CD4-positive, alpha-beta T cell (primary cell): ENCODE measurements at regions of chr11 and their contacts with region 1.

Region 1: GRCh38 chr11:35246745-35247144 is 107.8 kb downstream of the CD44 start:
- DNase-seq: peak in 1 of 14 experiments; percentile 2
- ATAC-seq: no peak
- H3K4me3 ChIP-seq: no peak overlapping the region
- H3K4me3 Mint-ChIP-seq: peak overlapping the region; percentile 73
- H3K27ac ChIP-seq: peak overlapping the region; percentile 53 to 62
- H3K27ac Mint-ChIP-seq: peak overlapping the region; percentile 97
- H3K4me1 ChIP-seq: peaks cover 53% of the 10 kb centered on the region
- H3K4me1 Mint-ChIP-seq: peaks cover 61% of the 10 kb centered on the region
- H3K27me3 ChIP-seq: no peaks in the 10 kb centered on the region
- H3K27me3 Mint-ChIP-seq: no peaks in the 10 kb centered on the region
- CTCF ChIP-seq: no peak

Region 2: DNA sequence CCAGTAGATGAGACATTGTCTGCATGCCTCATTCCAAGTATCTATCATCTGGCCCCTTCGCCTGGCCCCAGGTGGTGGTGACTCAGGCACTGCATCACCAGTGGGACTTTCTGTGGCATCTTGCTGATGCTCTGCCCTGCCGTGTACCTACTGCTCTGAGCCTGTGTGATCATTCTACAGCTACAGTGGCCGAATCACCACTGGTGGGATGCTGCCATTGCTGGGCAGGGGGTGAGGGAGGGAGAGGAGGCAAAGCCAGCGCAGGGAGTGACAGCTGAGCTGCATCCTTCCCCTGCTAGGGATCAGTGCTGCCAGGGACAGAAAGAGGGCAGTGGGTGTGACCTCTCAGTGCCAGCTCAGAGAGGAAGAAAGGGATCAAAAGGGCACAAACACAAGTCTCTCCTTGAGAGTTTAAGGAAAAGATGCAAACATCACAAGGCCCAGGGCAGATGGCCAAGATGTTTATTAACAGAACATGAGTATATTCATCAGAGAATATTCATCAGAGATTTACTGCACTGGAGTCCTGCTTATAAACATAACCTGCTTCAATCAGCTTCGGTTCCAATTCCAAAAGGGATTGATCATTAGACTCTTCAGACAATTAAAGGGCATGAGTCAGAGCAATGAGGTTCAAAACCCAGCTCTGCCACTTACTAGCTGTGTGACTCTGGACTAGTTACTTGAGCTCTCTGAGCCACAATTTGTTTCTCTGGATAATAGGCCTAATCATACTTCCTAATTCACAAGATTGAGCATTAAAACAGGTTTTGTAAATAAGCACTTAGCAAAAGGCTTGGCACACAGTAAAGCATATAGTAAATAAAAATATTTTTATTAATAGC is 1031.6 kb before region 1 on chr11:
- CTCF ChIA-PET with region 1: no interaction called
- POLR2A ChIA-PET with region 1: no interaction called
- intact Hi-C with region 1: no loop called
- DNase-seq: peak in 6 of 14 experiments; percentile 5 to 46 (median 35)
- ATAC-seq: peak; percentile 32
- H3K4me3 ChIP-seq: no peak overlapping the region
- H3K4me3 Mint-ChIP-seq: no peak overlapping the region
- H3K27ac ChIP-seq: no peak overlapping the region
- H3K27ac Mint-ChIP-seq: no peak overlapping the region
- H3K4me1 ChIP-seq: no peaks in the 10 kb centered on the region
- H3K4me1 Mint-ChIP-seq: no peaks in the 10 kb centered on the region
- H3K27me3 ChIP-seq: no peaks in the 10 kb centered on the region
- H3K27me3 Mint-ChIP-seq: no peaks in the 10 kb centered on the region
- CTCF ChIP-seq: no peak

Region 3: DNA sequence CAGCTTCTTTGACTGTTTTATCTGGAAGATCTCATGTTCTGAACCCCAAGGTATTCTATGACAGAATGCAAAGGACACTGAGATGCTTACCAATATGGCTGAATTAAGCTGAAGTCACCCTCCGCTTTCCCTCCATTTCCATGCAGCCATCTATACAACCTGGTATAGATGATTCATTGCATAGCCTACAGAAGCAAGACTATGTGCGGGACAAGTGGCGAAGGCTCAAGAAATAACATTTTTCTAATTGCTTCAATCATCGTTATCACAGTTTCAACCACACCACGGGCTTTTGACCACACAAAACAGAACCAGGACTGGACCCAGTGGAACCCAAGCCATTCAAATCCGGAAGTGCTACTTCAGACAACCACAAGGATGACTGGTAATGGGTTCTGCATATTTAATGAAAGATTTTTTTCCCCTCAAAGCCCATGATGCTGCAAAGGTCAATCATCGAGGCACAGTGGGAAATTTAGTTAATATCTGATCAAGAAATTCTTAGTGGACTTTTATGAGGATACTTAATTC is 45.9 kb before region 1 on chr11:
- CTCF ChIA-PET with region 1: no interaction called
- POLR2A ChIA-PET with region 1: no interaction called
- intact Hi-C with region 1: loop called in 1 of 2 experiments (anchors 5 kb)
- DNase-seq: no peak
- ATAC-seq: no peak
- H3K4me3 ChIP-seq: no peak overlapping the region
- H3K4me3 Mint-ChIP-seq: no peak overlapping the region
- H3K27ac ChIP-seq: no peak overlapping the region
- H3K27ac Mint-ChIP-seq: peak overlapping the region; percentile 71
- H3K4me1 ChIP-seq: no peaks in the 10 kb centered on the region
- H3K4me1 Mint-ChIP-seq: peaks cover 93% of the 10 kb centered on the region
- H3K27me3 ChIP-seq: no peaks in the 10 kb centered on the region
- H3K27me3 Mint-ChIP-seq: no peaks in the 10 kb centered on the region
- CTCF ChIP-seq: no peak

Region 4: GRCh38 chr11:35265755-35266454 is 19.2 kb after region 1 on chr11:
- CTCF ChIA-PET with region 1: no interaction called
- POLR2A ChIA-PET with region 1: no interaction called
- intact Hi-C with region 1: no loop called
- DNase-seq: no peak
- ATAC-seq: no peak
- H3K4me3 ChIP-seq: no peak overlapping the region
- H3K4me3 Mint-ChIP-seq: no peak overlapping the region
- H3K27ac ChIP-seq: no peak overlapping the region
- H3K27ac Mint-ChIP-seq: no peak overlapping the region
- H3K4me1 ChIP-seq: no peaks in the 10 kb centered on the region
- H3K4me1 Mint-ChIP-seq: no peaks in the 10 kb centered on the region
- H3K27me3 ChIP-seq: no peaks in the 10 kb centered on the region
- H3K27me3 Mint-ChIP-seq: no peaks in the 10 kb centered on the region
- CTCF ChIP-seq: no peak

Region 5: GRCh38 chr11:35305670-35306382 is 59.1 kb after region 1 on chr11:
- CTCF ChIA-PET with region 1: interaction called, 5 read pairs
- POLR2A ChIA-PET with region 1: interaction called, 3 read pairs
- intact Hi-C with region 1: loop called in 1 of 2 experiments (anchors 5 kb)
- DNase-seq: peak; percentile 23 to 78 (median 32)
- ATAC-seq: peak; percentile 77
- H3K4me3 ChIP-seq: no peak overlapping the region
- H3K4me3 Mint-ChIP-seq: peak overlapping the region; percentile 65
- H3K27ac ChIP-seq: no peak overlapping the region
- H3K27ac Mint-ChIP-seq: peak overlapping the region; percentile 4
- H3K4me1 ChIP-seq: peaks cover 28% of the 10 kb centered on the region
- H3K4me1 Mint-ChIP-seq: peaks cover 26% of the 10 kb centered on the region
- H3K27me3 ChIP-seq: no peaks in the 10 kb centered on the region
- H3K27me3 Mint-ChIP-seq: no peaks in the 10 kb centered on the region
- CTCF ChIP-seq: peak; percentile 76

Region 6: DNA sequence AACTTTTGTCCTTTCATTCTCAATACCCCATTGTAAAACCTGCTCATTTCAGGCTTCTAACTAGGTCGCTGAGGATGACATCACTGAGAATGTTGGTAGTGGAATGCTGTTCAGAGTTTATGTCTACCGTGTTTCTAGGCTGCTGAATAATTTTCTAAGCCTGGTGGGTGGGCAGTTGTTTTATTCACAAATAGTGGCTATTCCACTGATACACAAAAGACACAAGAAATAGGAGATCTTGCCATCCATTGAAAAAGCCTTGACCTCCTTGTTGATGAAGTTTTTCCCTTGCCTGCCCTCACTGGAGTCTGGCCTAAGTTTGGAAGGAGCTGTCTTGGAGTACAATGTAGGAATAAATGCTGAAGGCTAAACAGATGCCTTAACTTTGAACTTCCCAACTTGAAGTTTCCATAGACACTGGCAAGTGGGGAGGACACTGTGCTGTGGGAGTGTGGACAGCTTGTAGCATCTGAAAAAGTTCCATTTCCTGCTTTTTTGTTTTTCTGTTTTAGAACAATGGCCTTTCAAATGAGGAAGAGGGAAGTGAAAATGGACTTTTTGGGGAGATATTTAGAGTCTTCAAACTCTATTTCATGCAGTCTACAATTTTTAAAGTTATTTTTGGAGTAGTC is 475.0 kb after region 1 on chr11:
- CTCF ChIA-PET with region 1: no interaction called
- POLR2A ChIA-PET with region 1: no interaction called
- intact Hi-C with region 1: no loop called
- DNase-seq: no peak
- ATAC-seq: no peak
- H3K4me3 ChIP-seq: no peak overlapping the region
- H3K4me3 Mint-ChIP-seq: no peak overlapping the region
- H3K27ac ChIP-seq: no peak overlapping the region
- H3K27ac Mint-ChIP-seq: no peak overlapping the region
- H3K4me1 ChIP-seq: no peaks in the 10 kb centered on the region
- H3K4me1 Mint-ChIP-seq: peaks cover 51% of the 10 kb centered on the region
- H3K27me3 ChIP-seq: no peaks in the 10 kb centered on the region
- H3K27me3 Mint-ChIP-seq: no peaks in the 10 kb centered on the region
- CTCF ChIP-seq: no peak